ENCODE measurements at regions of chr2 and their contacts with region 1.

Region 1: GRCh38 chr2:88857951-88858411 is 166.5 kb downstream of the RPIA start:
- H3K4me3 ChIP-seq: no peak overlapping the region
- H3K27ac ChIP-seq: no peak overlapping the region
- H3K4me1 ChIP-seq: no peaks in the 10 kb centered on the region
- CTCF ChIP-seq: no peak

Region 2: DNA sequence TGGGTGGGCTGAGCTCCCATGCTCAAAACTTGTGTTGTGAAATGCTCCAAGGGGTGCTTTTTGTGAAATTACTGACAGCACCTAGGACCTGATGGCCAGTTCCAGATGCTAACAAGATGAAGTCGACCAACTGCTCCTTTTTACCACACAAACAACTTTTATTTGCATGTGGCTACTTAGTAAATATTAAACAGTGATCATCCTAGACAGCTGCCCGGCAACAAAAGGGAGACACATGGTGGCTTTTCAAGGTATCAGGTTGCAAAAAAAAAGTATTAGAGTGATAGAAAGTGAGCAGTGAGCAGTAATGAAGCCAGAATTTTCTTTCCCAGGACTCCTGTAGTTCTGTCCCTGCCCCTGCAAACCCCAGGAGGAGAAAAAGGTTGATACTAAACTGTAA is 48.0 kb before region 1 on chr2:
- CTCF ChIA-PET with region 1: no interaction called
- POLR2A ChIA-PET with region 1: no interaction called
- H3K4me3 ChIP-seq: no peak overlapping the region
- H3K27ac ChIP-seq: no peak overlapping the region
- H3K4me1 ChIP-seq: no peaks in the 10 kb centered on the region
- CTCF ChIP-seq: no peak

Region 3: DNA sequence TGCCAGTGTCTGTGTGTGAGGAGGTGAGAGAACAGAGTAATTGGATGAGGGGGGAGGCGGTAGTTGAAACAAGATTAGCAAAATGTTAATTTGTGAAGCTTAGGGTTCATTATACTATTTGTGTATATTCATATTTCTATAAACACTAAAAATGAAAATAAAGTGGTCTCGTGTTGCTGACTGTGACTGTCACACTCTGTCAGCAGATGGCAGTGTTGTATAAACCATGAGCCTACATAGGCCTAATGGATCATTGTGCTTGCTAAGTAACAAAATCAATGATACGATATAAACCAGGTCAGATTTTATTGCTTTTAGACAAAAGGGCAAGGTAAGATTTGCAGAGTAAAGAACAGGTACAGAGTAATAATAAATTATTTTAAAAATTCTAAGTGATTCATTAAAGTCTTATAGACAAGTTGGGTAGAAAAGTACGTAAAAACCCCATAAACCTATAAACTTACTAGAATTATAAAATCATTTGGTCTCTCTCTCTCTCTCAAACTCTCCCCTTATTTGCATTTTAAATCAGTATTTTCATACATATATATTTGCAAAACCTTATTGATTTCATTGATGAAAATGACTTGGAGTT is 16.2 kb after region 1 on chr2:
- CTCF ChIA-PET with region 1: interaction called, 24 read pairs
- POLR2A ChIA-PET with region 1: no interaction called
- H3K4me3 ChIP-seq: no peak overlapping the region
- H3K27ac ChIP-seq: no peak overlapping the region
- H3K4me1 ChIP-seq: no peaks in the 10 kb centered on the region
- CTCF ChIP-seq: peak; percentile 55; the same call in 1 of the 2 replicates

Region 4: DNA sequence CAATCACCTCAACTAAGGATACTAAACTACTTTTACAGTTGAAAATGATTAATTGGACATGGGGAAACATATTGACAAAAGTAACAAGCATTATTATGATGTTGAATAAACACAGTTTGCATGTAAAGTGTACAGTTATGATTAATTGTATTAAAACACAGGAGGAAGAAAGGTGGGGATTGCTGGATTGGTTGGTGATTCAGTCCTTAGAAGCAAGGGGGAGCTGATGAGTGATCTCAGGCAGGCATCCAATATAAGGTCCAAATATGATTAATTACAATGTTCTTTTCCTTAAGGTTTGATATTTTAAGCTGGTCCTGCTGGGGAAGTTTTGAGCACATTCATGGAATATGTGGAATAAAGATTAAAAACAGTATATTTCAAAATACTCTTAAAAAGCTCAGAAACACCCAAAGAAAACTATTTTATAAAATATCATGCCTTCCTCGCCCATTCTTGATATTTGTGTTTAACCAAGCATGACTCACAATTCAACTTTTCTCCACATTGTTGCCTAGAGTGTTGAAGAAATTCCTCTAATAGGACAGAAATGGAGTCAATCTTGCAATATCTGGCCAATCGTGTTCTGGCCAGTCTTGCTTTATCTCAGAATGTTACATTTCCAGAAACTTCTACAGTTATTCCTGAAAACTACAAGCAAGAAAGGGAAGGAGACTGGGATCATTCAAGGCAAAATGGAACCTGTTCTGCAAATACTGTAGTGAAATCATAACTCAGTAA is 101.7 kb after region 1 on chr2:
- CTCF ChIA-PET with region 1: no interaction called
- POLR2A ChIA-PET with region 1: no interaction called
- H3K4me3 ChIP-seq: no peak overlapping the region
- H3K27ac ChIP-seq: no peak overlapping the region
- H3K4me1 ChIP-seq: no peaks in the 10 kb centered on the region
- CTCF ChIP-seq: no peak